ENCODE measurements at regions of chr14 and their contacts with region 1.

Region 1: GRCh38 chr14:32252030-32252670 is 49.1 kb upstream of the RNU6-8 start:
- DNase-seq: peak; percentile 80
- H3K4me3 ChIP-seq: no peak overlapping the region
- H3K27ac ChIP-seq: no peak overlapping the region
- H3K4me1 ChIP-seq: peaks cover 7% of the 10 kb centered on the region
- H3K27me3 ChIP-seq: no peaks in the 10 kb centered on the region

Region 2: GRCh38 chr14:31510222-31510621 is 741.9 kb before region 1 on chr14:
- in situ Hi-C with region 1: loop called (anchors 10 kb)
- DNase-seq: peak; percentile 50
- H3K4me3 ChIP-seq: no peak overlapping the region
- H3K27ac ChIP-seq: no peak overlapping the region
- H3K4me1 ChIP-seq: peaks cover 12% of the 10 kb centered on the region
- H3K27me3 ChIP-seq: no peaks in the 10 kb centered on the region

Region 3: DNA sequence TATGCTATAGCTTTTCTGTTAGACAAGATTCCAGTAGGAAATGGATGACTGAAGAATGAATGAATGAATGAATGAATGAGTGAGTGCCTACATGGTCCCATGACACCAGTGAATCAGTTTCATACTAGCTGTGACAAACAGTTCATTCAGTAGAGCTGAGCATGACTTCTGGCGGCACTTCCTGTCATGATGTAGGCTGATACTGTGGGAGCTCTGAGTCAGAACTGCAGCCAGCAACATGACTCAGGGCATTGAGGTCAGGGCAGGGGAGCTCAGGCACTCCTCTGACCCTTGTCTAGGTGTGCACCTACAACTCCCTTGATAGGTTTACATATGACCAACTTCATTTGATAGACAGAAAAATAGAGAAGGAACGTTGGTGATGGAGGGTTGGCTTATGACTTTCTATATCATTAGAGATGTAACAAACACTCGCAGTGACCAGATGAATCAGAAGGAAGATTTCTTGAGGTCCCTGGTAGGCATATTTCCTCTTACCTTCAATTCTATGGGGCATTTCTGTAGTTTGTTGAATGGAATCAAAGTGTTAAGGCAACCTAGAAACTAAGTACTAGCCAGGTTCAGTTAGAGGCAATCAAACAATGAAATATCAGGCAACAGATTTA is 314.3 kb before region 1 on chr14:
- in situ Hi-C with region 1: loop called (anchors 10 kb)
- DNase-seq: peak; percentile 95
- H3K4me3 ChIP-seq: no peak overlapping the region
- H3K27ac ChIP-seq: peak overlapping the region; percentile 62
- H3K4me1 ChIP-seq: peaks cover 25% of the 10 kb centered on the region
- H3K27me3 ChIP-seq: no peaks in the 10 kb centered on the region

Region 4: GRCh38 chr14:32469388-32470160 is 217.4 kb after region 1 on chr14:
- in situ Hi-C with region 1: loop called (anchors 10 kb)
- DNase-seq: peak; percentile 78
- H3K4me3 ChIP-seq: peak overlapping the region; percentile 23; the same call in 1 of the 2 replicates
- H3K27ac ChIP-seq: peak overlapping the region; percentile 83
- H3K4me1 ChIP-seq: peaks cover 55% of the 10 kb centered on the region
- H3K27me3 ChIP-seq: no peaks in the 10 kb centered on the region